Activated CD8-positive, alpha-beta T cell treated with anti-CD3 and anti-CD28 coated beads, Interleukin-2, amount 10 ng/mL, durations not matched to agents 7 days and 5 days (primary cell): ENCODE measurements at regions of chr5 and their contacts with region 1.

Region 1: DNA sequence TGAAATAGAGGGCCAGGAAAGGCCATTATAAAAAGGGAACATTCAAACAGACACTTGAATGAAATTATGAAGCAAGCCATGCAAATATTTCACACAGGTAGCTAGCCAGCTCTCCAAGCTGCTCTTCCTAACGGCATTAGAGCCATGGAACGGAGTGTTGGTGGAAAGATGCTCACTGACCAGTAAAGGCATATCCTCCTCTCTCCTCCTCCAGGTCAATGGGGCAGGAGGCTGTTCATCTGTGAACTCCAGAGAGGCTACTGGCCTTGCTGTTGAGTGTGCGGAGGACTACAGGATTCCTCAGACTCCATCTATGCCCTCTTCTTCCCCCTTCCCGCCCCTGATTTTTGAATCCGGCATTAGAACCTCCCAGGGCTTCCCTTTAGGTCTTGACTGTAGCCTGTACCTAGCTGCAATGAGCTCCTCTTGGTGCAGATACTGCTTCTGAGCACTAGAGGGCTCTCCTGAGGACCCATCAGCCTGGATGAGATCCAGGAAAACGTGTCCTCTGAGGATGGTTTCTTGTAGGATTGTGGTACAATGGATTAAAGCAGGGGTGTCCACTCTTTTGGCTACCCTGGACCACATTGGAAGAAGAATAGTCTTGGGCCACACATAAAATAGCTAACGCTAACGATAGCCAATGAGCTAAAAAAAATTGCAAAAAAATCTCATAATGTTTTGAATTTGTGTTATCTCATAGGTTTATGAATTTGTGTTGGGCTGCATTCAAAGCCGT is 162.2 kb downstream of the SREK1 start:
- DNase-seq: peak; percentile 43
- ATAC-seq: peak; percentile 79
- H3K4me3 Mint-ChIP-seq: no peak overlapping the region
- H3K27ac Mint-ChIP-seq: no peak overlapping the region
- H3K4me1 Mint-ChIP-seq: peaks cover 2% of the 10 kb centered on the region
- H3K27me3 Mint-ChIP-seq: peaks cover 15% of the 10 kb centered on the region

Region 2: GRCh38 chr5:65760504-65761275 is 545.6 kb before region 1 on chr5:
- CTCF ChIA-PET with region 1: interaction called, 15 read pairs
- POLR2A ChIA-PET with region 1: no interaction called
- DNase-seq: peak; percentile 76
- ATAC-seq: peak; percentile 90
- H3K4me3 Mint-ChIP-seq: no peak overlapping the region
- H3K27ac Mint-ChIP-seq: no peak overlapping the region
- H3K4me1 Mint-ChIP-seq: peaks cover 8% of the 10 kb centered on the region
- H3K27me3 Mint-ChIP-seq: no peaks in the 10 kb centered on the region

Region 3: DNA sequence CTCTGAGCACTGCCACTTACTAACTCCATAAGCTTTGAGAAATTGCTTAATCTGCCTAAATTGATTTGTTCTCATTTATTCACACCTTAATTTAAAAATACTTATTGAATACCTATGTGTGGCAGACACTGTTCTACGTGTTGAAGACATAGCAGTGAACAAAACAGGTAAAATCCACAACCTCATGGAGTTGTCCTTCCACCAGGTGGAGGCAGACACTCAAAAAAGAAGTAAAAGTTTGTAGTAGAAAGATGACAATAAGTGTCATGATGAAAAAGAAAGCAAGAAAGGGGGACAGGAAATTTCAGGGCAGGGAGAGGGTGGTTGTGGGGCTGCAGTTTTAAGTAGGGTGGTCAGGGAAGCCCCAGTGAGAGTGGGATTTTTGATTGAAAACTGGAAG is 67.2 kb before region 1 on chr5:
- CTCF ChIA-PET with region 1: no interaction called
- POLR2A ChIA-PET with region 1: no interaction called
- DNase-seq: no peak
- ATAC-seq: no peak
- H3K4me3 Mint-ChIP-seq: no peak overlapping the region
- H3K27ac Mint-ChIP-seq: no peak overlapping the region
- H3K4me1 Mint-ChIP-seq: no peaks in the 10 kb centered on the region
- H3K27me3 Mint-ChIP-seq: no peaks in the 10 kb centered on the region

Region 4: DNA sequence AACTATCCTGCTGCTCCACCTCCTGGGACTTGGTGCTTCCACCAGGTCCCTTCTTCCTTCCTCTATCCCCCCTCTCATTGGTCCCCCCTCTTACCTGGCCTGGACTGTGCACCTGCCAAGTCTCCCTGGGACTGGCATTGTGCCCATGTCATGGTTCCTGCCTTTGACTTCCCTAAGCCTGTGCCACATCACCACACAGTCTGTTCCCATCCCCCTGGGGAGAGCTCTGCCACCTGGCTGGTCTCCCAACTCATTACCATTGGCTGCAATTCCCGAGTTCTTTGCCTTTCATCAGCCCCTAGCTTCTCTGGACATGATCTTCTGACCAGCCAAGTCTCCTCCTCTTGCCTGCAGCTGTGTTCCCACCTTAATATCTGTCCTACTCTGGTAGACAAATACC is 18.1 kb after region 1 on chr5:
- CTCF ChIA-PET with region 1: interaction called, 36 read pairs
- POLR2A ChIA-PET with region 1: interaction called, 3 read pairs
- DNase-seq: no peak
- ATAC-seq: no peak
- H3K4me3 Mint-ChIP-seq: no peak overlapping the region
- H3K27ac Mint-ChIP-seq: no peak overlapping the region
- H3K4me1 Mint-ChIP-seq: no peaks in the 10 kb centered on the region
- H3K27me3 Mint-ChIP-seq: peaks cover 5% of the 10 kb centered on the region

Region 5: DNA sequence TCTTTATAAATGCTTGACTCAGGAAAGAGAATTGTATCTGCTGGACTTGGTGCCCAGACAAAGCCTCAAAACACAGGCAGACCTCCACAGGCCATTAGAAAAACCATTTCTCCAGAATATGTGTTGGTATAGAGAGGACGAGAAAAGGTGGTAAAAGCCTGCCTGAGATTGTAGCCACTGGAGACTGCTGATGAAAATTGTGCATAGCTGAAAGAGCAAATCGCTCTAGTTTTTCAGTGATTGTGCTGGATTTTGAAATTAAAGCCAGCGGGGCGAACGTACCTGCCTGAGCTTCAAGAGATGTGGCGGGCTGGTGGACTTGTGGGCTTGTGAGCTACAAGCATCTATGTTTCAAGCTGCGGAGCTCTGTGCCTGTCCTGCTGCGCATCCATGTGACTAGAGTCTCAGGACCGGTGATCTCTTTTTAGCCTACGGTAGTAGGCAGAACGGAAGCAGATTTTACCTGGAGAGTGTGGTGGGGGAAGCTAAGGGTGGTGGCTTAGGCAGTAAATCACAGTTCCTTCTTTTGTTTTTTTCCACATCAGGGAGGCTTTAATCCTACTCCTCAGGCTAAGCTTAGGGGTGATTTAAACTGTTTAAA is 31.5 kb after region 1 on chr5:
- CTCF ChIA-PET with region 1: interaction called, 12 read pairs
- POLR2A ChIA-PET with region 1: no interaction called
- DNase-seq: no peak
- ATAC-seq: no peak
- H3K4me3 Mint-ChIP-seq: no peak overlapping the region
- H3K27ac Mint-ChIP-seq: no peak overlapping the region
- H3K4me1 Mint-ChIP-seq: no peaks in the 10 kb centered on the region
- H3K27me3 Mint-ChIP-seq: peaks cover 16% of the 10 kb centered on the region

Region 6: DNA sequence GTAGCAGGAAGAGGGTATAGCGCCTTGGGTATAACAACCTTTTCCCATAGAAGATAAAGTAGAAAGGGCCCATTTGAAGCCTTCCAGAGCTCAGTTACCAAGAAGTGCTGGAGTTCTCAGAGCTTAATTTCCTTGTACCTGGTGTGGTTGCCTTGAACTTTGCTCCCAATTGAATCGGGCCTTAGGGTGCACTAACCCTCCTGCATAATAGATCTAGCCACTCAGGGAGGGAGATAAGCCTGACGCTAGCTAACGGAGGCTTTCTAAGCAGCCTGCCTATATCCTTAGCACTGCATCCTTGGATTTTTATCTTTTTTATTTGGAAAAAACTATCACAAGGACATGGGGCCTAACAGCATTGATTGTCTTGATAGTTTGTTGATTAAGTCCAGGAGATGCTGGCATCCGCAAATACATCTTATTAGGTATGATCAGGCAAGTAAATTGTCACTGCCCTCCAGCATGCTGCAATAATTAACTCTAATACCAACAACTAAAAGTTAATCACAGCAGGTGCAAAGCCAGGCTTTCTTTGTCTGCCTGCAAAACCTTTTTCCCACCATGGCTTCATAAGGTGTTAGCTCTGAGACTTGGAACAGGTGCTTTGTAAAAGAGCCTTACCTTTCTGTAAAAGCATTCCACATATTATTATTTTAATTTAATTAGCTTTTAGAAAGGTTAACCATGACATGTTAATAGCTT is 37.2 kb after region 1 on chr5:
- CTCF ChIA-PET with region 1: interaction called, 12 read pairs
- POLR2A ChIA-PET with region 1: no interaction called
- DNase-seq: no peak
- ATAC-seq: no peak
- H3K4me3 Mint-ChIP-seq: no peak overlapping the region
- H3K27ac Mint-ChIP-seq: no peak overlapping the region
- H3K4me1 Mint-ChIP-seq: no peaks in the 10 kb centered on the region
- H3K27me3 Mint-ChIP-seq: peaks cover 20% of the 10 kb centered on the region

Region 7: GRCh38 chr5:66356011-66356565 is 49.8 kb after region 1 on chr5:
- CTCF ChIA-PET with region 1: no interaction called
- POLR2A ChIA-PET with region 1: no interaction called
- DNase-seq: no peak
- ATAC-seq: no peak
- H3K4me3 Mint-ChIP-seq: no peak overlapping the region
- H3K27ac Mint-ChIP-seq: no peak overlapping the region
- H3K4me1 Mint-ChIP-seq: peaks cover 5% of the 10 kb centered on the region
- H3K27me3 Mint-ChIP-seq: peaks cover 3% of the 10 kb centered on the region

Region 8: DNA sequence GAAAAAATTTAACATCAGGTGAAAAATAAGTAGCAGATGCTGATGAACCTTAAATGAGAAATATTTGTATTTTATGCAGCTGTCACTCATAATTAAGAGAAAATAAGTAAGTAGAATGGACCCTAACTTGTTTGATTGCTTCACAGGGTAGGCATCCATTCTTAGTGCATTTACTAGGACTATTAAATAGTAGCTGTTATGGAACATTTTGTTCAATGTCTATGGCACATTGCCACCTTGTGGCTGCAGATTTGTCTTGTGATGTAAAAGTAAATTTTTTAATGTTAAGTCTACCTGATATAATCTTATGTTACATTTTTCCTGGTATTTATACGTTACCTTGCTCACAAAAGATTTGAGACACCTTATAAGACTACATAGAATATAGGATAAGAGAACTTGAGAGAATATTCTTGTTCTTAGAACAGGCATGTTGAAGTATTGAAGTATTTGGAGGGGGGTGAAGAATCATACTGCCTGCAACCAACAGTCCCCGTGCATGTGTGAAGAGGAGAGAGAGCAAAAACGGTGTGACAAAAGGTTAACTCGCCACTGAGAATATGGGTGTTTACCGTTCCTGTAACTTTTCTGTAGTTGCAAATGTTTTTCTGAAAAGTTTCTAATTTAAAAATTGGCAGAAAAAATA is 451.0 kb after region 1 on chr5:
- CTCF ChIA-PET with region 1: interaction called, 20 read pairs
- POLR2A ChIA-PET with region 1: no interaction called
- DNase-seq: peak; percentile 39
- ATAC-seq: no peak
- H3K4me3 Mint-ChIP-seq: no peak overlapping the region
- H3K27ac Mint-ChIP-seq: no peak overlapping the region
- H3K4me1 Mint-ChIP-seq: no peaks in the 10 kb centered on the region
- H3K27me3 Mint-ChIP-seq: peaks cover 26% of the 10 kb centered on the region

Region 9: DNA sequence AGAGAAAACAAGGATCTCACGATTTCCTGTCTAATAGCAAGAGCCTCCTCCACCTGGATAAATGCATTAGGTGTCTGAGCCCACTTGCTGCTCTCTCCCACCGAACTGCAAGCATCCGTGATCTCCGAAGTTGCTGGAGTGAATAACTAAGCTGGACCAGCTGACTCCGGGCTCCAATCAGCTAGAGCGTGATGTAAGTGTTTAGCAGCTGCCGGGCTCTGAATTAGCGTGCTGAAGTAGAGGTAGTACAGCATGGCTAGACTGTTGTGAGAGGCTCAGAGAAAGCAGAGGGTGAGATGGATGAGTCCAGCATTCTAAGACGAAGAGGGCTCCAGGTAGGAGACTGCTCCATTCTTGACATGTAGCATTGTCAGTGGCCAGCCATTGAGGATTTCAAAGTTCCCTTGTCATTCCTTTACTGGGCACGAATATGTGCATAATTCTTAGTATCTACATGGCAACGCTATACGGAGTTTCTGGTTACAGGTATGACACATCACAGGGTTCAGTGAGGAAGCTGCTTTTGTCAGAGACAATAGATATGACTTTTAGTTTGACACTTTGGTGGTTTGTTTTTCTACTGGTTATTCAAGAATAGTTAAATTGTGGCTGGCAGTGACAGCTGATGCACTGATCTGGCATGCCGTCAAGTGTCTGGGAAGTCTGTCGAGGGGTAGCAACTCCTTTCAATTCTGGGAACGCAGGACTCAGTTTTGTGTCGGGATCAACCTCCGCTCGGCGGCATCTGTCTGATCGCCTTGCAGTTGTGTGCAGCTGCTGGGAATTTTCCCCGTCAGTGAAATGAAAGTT is 522.5 kb after region 1 on chr5:
- CTCF ChIA-PET with region 1: interaction called, 10 read pairs
- POLR2A ChIA-PET with region 1: no interaction called
- DNase-seq: peak; percentile 84
- ATAC-seq: peak; percentile 98
- H3K4me3 Mint-ChIP-seq: peak overlapping the region; percentile 86
- H3K27ac Mint-ChIP-seq: peak overlapping the region; percentile 87
- H3K4me1 Mint-ChIP-seq: peaks cover 43% of the 10 kb centered on the region
- H3K27me3 Mint-ChIP-seq: no peaks in the 10 kb centered on the region